Heart right ventricle (tissue), 16 donors: ENCODE measurements at regions of chr11 and their contacts with region 1.

Region 1: DNA sequence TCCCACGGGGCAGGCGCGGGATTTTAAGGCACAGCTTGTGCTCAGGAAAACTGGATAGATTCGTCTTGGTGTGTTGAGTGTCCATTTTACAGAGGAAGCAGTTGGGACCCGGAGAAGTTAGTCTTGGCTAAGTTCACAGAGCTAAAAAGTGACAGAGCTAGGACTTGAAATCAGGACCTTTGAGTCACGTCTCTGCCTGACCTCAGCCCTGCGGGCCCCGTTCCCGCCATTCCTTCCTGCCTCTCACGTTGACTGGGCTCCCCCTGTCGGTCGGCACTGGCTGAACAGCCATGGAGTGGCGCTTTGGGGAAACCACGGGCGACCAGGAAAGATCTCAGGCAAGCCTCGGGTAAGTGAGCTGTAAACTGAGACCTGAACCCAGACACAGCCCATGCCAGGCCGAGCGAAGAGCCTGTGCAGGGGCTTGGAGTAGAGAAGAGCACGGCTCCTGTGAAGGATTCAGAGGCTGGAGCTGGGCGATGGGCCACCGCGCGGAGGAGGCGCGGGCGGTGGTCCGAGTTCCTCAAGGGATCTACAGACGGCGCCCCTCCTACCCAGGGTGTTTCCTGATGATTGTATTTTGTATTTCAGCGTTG is 54.1 kb downstream of the WNT11 start:
- DNase-seq: peak; percentile 90 to 93
- ATAC-seq: peak; percentile 85 to 93 (median 90)
- H3K4me3 ChIP-seq: peak overlapping the region in 9 of 10 donors; percentile 27 to 62 (median 52)
- H3K27ac ChIP-seq: peak overlapping the region in 2 of 10 donors; percentile 4 to 32
- H3K4me1 ChIP-seq: peaks cover 0 to 23% (median 16%) of the 10 kb centered on the region in 9 donors
- H3K27me3 ChIP-seq: no peaks in the 10 kb centered on the region
- CTCF ChIP-seq: peak; percentile 92 to 99 (median 97)

Region 2: GRCh38 chr11:75554258-75555022 is 597.7 kb before region 1 on chr11:
- intact Hi-C with region 1: loop called in 1 of 10 experiments (anchors 10 kb)
- DNase-seq: peak; percentile 93 to 94
- ATAC-seq: peak; percentile 87 to 95 (median 93)
- H3K4me3 ChIP-seq: peak overlapping the region in 7 of 10 donors; percentile 8 to 42 (median 34)
- H3K27ac ChIP-seq: peak overlapping the region; percentile 52 to 98 (median 92)
- H3K4me1 ChIP-seq: peaks cover 13 to 58% (median 47%) of the 10 kb centered on the region in 9 donors
- H3K27me3 ChIP-seq: no peaks in the 10 kb centered on the region
- CTCF ChIP-seq: no peak

Region 3: DNA sequence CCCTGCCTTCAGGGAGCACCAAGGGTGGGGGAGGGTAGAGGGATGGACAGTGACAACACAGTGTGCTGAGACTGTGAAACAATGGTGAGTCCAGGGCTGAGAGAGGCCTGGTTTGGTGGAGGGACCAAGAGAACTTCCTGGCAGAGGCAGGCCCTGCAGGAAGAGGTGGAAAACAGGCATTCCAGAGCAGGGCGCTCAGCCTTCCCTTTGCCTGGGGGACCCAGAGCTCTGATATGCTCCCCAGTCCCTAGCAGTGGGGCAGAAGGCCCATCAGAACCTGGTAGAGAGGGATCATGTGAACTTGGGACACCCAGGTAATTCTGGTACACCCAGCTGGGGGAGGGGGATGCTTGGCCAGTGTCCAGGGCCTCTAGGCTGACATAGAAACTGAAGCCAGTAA is 354.4 kb before region 1 on chr11:
- intact Hi-C with region 1: loop called in 8 of 10 experiments (anchors 5 to 10 kb)
- DNase-seq: no peak
- ATAC-seq: no peak
- H3K4me3 ChIP-seq: no peak overlapping the region
- H3K27ac ChIP-seq: no peak overlapping the region
- H3K4me1 ChIP-seq: peaks cover 0 to 31% (median 13%) of the 10 kb centered on the region in 9 donors
- H3K27me3 ChIP-seq: no peaks in the 10 kb centered on the region
- CTCF ChIP-seq: no peak

Region 4: DNA sequence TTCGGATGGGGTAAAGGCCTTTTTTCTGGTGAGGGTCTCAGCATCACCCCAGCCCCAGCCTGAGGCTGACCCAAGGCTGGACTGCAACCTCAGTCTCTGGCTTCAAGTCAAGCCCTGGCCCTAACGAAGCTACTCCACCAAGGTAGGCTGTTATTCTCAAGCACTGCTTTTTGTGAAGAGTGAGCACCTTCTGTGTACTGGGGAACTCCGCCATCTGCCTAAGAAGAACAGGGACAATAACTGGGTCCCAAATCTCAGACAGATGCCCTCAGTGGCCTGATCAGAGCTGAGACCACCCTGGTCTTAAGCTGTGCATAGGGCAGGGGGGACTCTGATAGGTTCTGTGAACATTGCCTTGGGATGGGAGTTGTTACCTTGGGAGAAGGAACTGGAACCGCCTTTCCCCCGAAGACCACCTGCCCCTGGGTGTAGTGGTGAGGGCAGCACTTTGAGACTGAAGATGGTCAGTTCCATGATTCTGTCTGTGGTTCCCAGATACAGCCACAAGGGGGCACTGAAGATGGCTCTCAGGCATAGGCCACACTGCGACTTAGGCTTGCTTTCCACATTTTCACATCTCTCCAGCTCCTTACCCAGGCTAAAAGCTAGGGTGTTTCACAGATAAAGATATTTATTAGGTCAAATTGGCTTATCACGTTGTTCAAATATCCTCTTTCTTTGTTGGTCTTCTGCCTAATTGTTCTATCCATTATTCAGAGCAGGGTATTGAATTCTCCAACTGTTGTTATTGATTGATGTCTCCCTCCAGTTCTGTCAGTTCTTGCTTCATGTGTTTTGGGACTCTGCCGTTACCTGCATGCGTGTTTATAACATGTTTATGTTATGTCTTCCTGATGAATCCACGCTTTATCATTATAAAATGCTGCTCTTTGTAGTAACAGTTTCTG is 349.0 kb before region 1 on chr11:
- intact Hi-C with region 1: loop called in 8 of 10 experiments (anchors 5 to 10 kb)
- DNase-seq: peak in 1 of 2 donors; percentile 82
- ATAC-seq: peak; percentile 75 to 94 (median 88)
- H3K4me3 ChIP-seq: no peak overlapping the region
- H3K27ac ChIP-seq: peak overlapping the region in 1 of 10 donors; percentile 26
- H3K4me1 ChIP-seq: peaks cover 0 to 22% (median 0%) of the 10 kb centered on the region in 9 donors
- H3K27me3 ChIP-seq: no peaks in the 10 kb centered on the region
- CTCF ChIP-seq: peak; percentile 80 to 95 (median 92)

Region 5: GRCh38 chr11:75896843-75897419 is 255.3 kb before region 1 on chr11:
- intact Hi-C with region 1: loop called (anchors 1 to 5 kb)
- DNase-seq: no peak
- ATAC-seq: peak in 4 of 8 donors; percentile 29 to 65 (median 49)
- H3K4me3 ChIP-seq: no peak overlapping the region
- H3K27ac ChIP-seq: no peak overlapping the region
- H3K4me1 ChIP-seq: peaks cover 0 to 35% (median 10%) of the 10 kb centered on the region in 9 donors
- H3K27me3 ChIP-seq: no peaks in the 10 kb centered on the region
- CTCF ChIP-seq: peak; percentile 58 to 85 (median 73)

Region 6: DNA sequence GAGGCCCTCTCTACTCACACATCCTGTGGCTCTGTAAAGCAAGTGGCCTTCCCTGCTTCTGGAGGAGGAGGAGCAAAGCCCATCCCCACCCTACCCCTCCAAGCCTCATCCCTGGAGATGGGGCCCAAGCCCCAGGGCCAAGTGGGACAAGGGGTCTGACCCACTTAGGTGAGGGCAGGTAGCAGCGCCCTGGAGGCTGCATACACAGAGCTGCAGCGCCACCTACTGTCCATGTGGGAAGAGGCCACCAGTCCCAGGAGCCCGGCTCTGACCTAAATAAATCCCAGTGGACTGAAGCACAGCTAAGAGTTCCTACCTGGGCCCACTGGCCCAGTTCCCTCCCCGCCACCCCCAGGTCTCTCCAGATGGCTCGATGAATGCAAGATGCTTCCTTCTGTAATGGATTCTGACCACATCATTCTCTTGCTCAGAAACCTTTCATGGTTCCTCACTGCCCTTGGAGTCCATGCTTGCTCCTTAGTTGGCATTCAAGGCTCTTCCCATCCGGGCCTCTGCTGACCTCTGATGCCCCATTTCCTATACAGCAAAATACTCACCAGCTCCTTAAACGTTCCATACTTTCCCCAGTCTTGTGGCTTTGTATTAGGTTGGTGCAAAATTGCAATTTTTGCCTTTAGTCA is 166.7 kb after region 1 on chr11:
- intact Hi-C with region 1: loop called in 1 of 10 experiments (anchors 5 kb)
- DNase-seq: peak; percentile 79 to 83
- ATAC-seq: peak; percentile 83 to 94 (median 88)
- H3K4me3 ChIP-seq: no peak overlapping the region
- H3K27ac ChIP-seq: no peak overlapping the region
- H3K4me1 ChIP-seq: peaks cover 0 to 19% (median 13%) of the 10 kb centered on the region in 9 donors
- H3K27me3 ChIP-seq: peaks cover 0 to 32% (median 19%) of the 10 kb centered on the region in 7 donors
- CTCF ChIP-seq: peak; percentile 80 to 97 (median 90)